ENCODE measurements at regions of chr1 and their contacts with region 1.

Region 1: DNA sequence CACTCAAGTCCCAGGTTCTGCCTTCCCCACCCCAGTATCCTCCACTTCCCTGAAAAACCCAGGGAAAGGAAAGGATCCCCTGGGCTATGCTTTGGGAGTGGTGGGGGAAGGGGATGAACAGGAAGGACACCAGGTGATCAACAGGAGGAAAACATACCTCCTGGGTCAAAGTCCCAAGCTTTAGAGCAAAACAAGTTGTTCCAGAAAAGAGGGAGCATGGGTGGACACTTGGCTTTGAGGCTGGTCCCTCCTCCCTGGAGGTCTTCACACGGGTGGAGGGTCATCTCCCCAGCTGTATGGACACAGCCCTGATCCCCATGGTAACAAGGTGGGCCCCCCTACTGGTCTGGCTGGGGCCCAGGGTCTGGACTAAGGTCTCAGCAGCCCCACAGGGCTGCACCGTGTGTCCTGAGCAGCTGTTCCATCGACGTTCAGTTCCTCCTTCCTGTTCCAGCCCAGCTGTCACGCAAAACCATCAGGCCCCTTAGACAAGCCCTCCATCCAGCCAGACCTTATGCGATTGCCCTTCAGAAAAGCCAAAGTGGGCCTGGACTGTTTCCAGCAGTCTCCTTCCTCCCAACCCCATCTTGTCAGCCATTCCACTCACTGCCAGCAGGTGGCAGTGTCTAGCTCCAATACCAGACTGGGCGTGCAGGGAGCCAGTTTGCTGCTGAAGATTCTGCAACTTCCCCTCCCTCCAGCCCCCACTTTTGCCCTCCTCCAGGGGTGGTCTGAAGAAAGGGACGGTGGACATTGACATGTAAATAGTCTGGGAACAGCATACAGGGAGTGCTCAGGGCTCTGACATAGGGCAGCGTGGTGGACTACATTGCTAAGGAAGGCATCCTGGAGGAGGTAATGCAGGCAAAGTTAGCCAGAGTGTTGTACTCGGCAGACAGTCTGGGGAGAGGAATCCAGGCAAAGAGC is 2.9 kb upstream of the PDZK1IP1 start:
- DNase-seq: peak; percentile 77 to 91 (median 91)
- ATAC-seq: peak; percentile 27 to 60
- H3K4me3 ChIP-seq: no peak overlapping the region
- H3K27ac ChIP-seq: no peak overlapping the region
- H3K4me1 ChIP-seq: peaks cover 4% of the 10 kb centered on the region
- H3K27me3 ChIP-seq: no peaks in the 10 kb centered on the region

Region 2: GRCh38 chr1:47262787-47263413 is 70.2 kb after region 1 on chr1:
- intact Hi-C with region 1: loop called in 2 of 4 experiments (anchors 2 to 10 kb)
- DNase-seq: peak in 1 of 3 donors; percentile 20
- ATAC-seq: peak in 1 of 2 donors; percentile 53
- H3K4me3 ChIP-seq: no peak overlapping the region
- H3K27ac ChIP-seq: no peak overlapping the region
- H3K4me1 ChIP-seq: no peaks in the 10 kb centered on the region
- H3K27me3 ChIP-seq: no peaks in the 10 kb centered on the region

Region 3: GRCh38 chr1:47424336-47424982 is 231.7 kb after region 1 on chr1:
- intact Hi-C with region 1: loop called in 2 of 4 experiments (anchors 10 kb)
- DNase-seq: peak in 1 of 3 donors; percentile 16
- ATAC-seq: peak in 1 of 2 donors; percentile 23
- H3K4me3 ChIP-seq: no peak overlapping the region
- H3K27ac ChIP-seq: no peak overlapping the region
- H3K4me1 ChIP-seq: no peaks in the 10 kb centered on the region
- H3K27me3 ChIP-seq: no peaks in the 10 kb centered on the region

Region 4: GRCh38 chr1:47437447-47438164 is 244.9 kb after region 1 on chr1 and contains the start of gene FOXD2:
- intact Hi-C with region 1: loop called in 1 of 4 experiments (anchors 10 kb)
- DNase-seq: peak; percentile 86 to 94 (median 93)
- ATAC-seq: peak; percentile 95
- H3K4me3 ChIP-seq: peak within 1 kb of the TSS; percentile 84
- H3K27ac ChIP-seq: no peak within 1 kb of the TSS
- H3K4me1 ChIP-seq: no peaks in the 10 kb centered on the region
- H3K27me3 ChIP-seq: peaks cover 3% of the 10 kb centered on the region
- total RNA-seq, gene FOXD2: 0.06 to 0.08 TPM in 2 of 4 donors, not detected in the others

Measured in right cardiac atrium (tissue), 5 donors.